ENCODE measurements at regions of chr2 and their contacts with region 1.

Region 1: GRCh38 chr2:112884869-112885505 is 26.0 kb upstream of the IL37 start:
- DNase-seq: no peak
- ATAC-seq: peak; percentile 55

Region 2: GRCh38 chr2:112749755-112750559 is 135.0 kb before region 1 on chr2:
- intact Hi-C with region 1: loop called (anchors 10 kb)
- DNase-seq: peak; percentile 72
- ATAC-seq: peak; percentile 55

Measured in left ventricle myocardium superior (tissue), 1 donor.